ENCODE measurements at regions of chr2 and their contacts with region 1.

Region 1: DNA sequence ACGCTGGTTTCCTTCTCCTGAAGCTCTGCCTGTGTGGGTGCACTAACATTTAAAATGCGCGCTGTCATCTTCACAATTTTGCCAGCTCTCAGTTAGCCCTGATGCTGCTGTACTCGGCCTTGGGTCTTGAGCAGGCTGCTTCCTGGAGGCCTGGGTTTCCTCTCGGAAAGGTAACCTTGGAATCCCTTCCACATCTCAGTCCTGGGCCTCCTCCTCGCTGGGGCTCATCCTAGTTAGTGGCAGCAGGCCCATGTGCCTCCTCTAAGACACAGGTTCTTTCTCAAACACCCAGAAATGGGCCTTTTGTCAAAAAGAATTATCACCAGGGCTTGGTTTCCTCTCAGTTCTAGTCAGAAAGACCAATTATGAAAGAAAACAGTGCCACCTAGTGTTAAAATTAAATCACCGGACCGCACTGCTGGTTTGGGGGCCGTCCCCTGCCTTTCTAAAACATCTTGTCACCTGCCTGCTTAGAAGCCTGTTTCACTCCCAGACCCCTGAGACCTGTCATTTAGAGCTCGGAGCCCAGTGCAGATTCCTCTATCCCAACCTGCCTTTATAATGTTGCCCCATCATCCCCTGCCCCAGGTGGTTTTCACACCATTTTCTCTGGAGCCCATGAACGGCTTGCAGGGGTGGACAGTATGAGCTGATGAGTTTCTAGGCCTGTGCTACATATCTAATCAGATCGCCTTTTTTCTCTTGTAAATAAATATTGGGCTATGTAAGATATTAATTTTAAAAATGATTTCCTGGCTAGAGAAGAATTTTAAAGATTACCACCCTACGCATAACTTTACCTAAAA is 42.4 kb downstream of the HK2 start:
- DNase-seq: peak; percentile 28
- ATAC-seq: peak; percentile 76
- H3K4me3 Mint-ChIP-seq: no peak overlapping the region
- H3K27ac Mint-ChIP-seq: 0 out of 2 replicates have a peak overlapping the region, but pooled peaks have one; percentile 39
- H3K4me1 Mint-ChIP-seq: no peaks in the 10 kb centered on the region; the same call in 1 of the 2 replicates
- H3K27me3 Mint-ChIP-seq: no peaks in the 10 kb centered on the region
- CTCF ChIP-seq: no peak; the same call in none of the 2 replicates

Region 2: GRCh38 chr2:74632209-74632938 is 243.9 kb before region 1 on chr2:
- CTCF ChIA-PET with region 1: no interaction called
- POLR2A ChIA-PET with region 1: no interaction called
- DNase-seq: no peak
- ATAC-seq: peak; percentile 98
- H3K4me3 Mint-ChIP-seq: no peak overlapping the region
- H3K27ac Mint-ChIP-seq: peak overlapping the region; percentile 78; the same call in 1 of the 2 replicates
- H3K4me1 Mint-ChIP-seq: peaks cover 20% of the 10 kb centered on the region
- H3K27me3 Mint-ChIP-seq: no peaks in the 10 kb centered on the region; the same call in 1 of the 2 replicates
- CTCF ChIP-seq: no peak

Region 3: DNA sequence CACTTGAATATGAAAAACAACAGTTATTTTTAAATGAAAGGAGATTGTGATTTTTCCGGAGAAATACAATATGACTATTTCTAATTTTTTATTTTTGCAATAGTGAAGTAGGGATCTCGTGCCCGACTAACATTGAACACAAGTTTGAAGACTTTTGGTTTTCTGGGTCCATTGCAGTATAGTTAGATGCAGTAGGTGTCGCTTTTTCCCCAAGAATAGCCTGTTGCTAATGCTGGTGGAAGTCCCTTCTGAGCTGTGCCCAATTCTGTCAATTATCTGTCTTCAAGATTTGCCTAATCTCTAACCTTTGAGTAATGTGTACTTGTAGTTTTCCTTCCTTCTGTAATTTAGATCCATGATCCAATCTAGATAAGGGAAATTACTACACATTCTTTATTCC is 185.7 kb before region 1 on chr2:
- CTCF ChIA-PET with region 1: interaction called, 27 read pairs
- POLR2A ChIA-PET with region 1: no interaction called
- DNase-seq: no peak
- ATAC-seq: peak; percentile 83
- H3K4me3 Mint-ChIP-seq: no peak overlapping the region
- H3K27ac Mint-ChIP-seq: no peak overlapping the region
- H3K4me1 Mint-ChIP-seq: no peaks in the 10 kb centered on the region
- H3K27me3 Mint-ChIP-seq: no peaks in the 10 kb centered on the region
- CTCF ChIP-seq: peak; percentile 35

Region 4: GRCh38 chr2:75007819-75008218 is 131.5 kb after region 1 on chr2:
- CTCF ChIA-PET with region 1: no interaction called
- POLR2A ChIA-PET with region 1: no interaction called
- DNase-seq: no peak
- ATAC-seq: no peak
- H3K4me3 Mint-ChIP-seq: no peak overlapping the region
- H3K27ac Mint-ChIP-seq: no peak overlapping the region
- H3K4me1 Mint-ChIP-seq: no peaks in the 10 kb centered on the region
- H3K27me3 Mint-ChIP-seq: no peaks in the 10 kb centered on the region
- CTCF ChIP-seq: no peak